ENCODE measurements at regions of chr11 and their contacts with region 1.

Region 1: DNA sequence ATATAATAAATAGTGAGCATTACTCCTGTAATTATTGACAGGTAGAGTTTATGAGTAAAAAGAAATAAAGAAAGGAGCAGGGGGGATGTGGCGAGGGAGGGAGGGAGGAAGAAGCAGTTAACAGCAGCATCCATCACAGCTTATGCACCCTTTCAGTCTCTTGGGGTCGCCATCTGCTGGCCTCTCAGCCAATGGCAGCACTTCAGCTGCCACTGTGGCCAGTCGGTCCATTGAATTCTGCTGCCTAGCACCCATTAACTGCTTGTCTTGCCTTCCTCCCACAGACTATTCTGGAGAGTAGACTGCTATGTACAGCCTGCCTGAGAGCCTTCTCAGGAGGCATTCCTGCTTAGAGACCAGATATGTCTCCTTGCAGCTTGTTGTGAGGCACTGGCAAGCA is 388.3 kb downstream of the TENM4 start:
- DNase-seq: no peak
- H3K4me3 ChIP-seq: no peak overlapping the region
- H3K27ac ChIP-seq: no peak overlapping the region
- H3K4me1 ChIP-seq: no peaks in the 10 kb centered on the region
- H3K27me3 ChIP-seq: no peaks in the 10 kb centered on the region
- CTCF ChIP-seq: peak; percentile 33 to 66 (median 50)
- EP300 ChIP-seq: no peak
- POLR2A ChIP-seq: no peak
- RAD21 ChIP-seq: peak; percentile 44 to 49

Region 2: DNA sequence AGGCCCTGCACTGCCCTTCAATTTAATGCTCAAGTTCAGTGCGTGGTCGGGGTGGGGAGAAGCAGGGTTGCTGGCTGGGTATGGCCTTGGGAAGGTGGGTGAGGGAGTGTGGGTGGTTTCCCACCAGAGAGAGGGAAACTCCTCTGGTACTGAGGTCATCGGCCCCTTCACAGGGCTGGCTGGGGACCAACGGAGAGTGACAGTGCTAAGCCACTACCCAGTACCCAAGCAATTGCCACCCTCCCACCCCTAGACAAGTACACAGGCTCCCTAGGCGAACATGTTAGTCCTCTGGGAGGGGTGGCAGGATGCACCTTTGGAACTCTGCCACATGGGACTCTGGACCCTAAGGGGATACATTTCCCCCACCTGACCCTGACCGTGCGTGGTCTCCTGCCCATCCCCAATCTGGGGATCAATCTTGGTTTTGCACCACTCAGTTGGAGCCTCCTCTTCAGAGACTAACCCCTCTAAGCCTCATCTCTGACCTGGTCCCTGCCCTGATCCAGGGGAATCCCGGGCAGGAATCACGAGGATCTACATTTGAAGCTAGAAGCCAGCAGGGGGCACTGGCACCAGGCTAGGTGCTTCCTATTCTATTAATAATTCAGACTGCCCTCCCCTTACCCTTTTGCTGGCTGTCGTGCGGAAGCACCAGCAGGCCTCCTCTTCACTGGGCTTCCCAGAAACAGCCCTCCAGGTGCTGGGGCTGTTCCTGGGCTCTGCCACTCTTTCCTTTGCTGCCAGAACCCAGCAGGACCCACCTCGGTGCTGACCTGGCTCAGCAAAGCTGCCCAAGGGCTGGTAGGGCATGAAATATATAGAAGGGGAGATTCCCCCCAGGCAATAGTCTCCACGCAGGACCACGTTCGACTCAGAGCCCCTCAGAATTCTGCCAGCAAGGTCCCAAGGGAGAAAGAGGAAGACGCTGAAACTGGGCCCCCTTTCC is 10.5 kb after region 1 on chr11:
- CTCF ChIA-PET with region 1: interaction called, 14 read pairs
- POLR2A ChIA-PET with region 1: no interaction called
- DNase-seq: peak; percentile 31 to 64
- H3K4me3 ChIP-seq: no peak overlapping the region
- H3K27ac ChIP-seq: no peak overlapping the region
- H3K4me1 ChIP-seq: peaks cover 9 to 29% (median 14%) of the 10 kb centered on the region in 4 experiments
- H3K27me3 ChIP-seq: no peaks in the 10 kb centered on the region
- CTCF ChIP-seq: peak; percentile 42 to 55 (median 45)
- EP300 ChIP-seq: no peak
- POLR2A ChIP-seq: no peak
- RAD21 ChIP-seq: peak; percentile 40 to 56

Region 3: GRCh38 chr11:79071190-79071589 is 18.6 kb after region 1 on chr11:
- CTCF ChIA-PET with region 1: interaction called, 18 read pairs
- POLR2A ChIA-PET with region 1: no interaction called
- DNase-seq: no peak
- H3K4me3 ChIP-seq: no peak overlapping the region
- H3K27ac ChIP-seq: no peak overlapping the region
- H3K4me1 ChIP-seq: peaks cover 2 to 22% (median 8%) of the 10 kb centered on the region in 4 experiments
- H3K27me3 ChIP-seq: no peaks in the 10 kb centered on the region
- CTCF ChIP-seq: no peak
- EP300 ChIP-seq: no peak
- POLR2A ChIP-seq: no peak
- RAD21 ChIP-seq: no peak

Measured in H1 (cell line).